ENCODE measurements at regions of chr7 and their contacts with region 1.

Region 1: GRCh38 chr7:116984917-116985316 is 31.6 kb downstream of the ST7 start:
- DNase-seq: no peak
- H3K4me3 Mint-ChIP-seq: no peak overlapping the region
- H3K27ac Mint-ChIP-seq: no peak overlapping the region
- H3K4me1 Mint-ChIP-seq: peaks cover 2% of the 10 kb centered on the region
- H3K27me3 Mint-ChIP-seq: no peaks in the 10 kb centered on the region

Region 2: DNA sequence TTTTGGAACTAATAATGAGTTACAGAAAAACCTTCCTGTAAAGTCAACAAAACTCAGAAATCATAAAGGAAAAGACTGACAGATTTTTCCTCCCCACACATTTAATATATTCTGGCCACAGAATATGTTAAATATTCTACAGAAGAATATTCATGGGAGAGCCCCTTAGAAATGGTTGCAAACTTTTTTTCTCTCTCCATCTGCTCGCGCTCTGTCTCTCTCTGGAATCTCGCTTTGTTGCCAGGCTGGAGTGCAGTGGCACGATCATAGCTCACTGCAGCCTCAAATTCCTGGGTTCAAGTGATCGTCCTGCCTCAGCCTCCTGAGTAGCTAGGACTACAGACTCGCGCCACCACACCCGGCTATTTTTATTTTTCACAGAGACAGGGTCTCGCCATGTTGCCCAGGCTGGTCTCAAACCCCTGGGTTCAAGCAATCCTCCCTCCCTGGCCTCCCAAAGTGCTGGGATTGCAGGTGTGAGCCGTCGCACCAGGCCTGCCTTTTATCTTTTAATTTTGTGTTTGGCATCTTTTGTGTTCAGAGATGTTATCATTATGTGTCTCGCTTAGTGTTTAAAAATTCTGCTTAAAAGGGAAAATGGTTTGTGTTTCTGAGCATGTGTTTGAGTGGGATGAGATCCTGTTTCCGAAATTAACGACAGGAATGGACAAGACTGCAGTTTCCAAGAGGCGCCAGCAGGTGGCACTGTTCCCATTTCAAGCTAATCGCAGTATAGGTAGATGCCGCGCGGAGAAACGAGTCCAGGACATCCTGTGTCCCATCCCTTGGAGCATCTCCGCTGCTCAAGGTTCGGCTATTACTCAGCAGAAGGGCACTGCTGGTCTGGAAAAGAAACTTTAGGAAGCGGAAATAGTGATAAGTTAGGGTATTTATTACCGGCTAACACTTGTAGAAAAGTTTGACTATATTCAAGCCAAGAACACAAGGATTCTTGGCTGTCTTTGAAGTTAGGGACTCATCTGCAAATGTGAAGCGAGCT is 54.7 kb before region 1 on chr7:
- CTCF ChIA-PET with region 1: interaction called, 6 read pairs
- intact Hi-C with region 1: loop called (anchors 1 kb)
- DNase-seq: peak; percentile 85
- H3K4me3 Mint-ChIP-seq: no peak overlapping the region
- H3K27ac Mint-ChIP-seq: no peak overlapping the region
- H3K4me1 Mint-ChIP-seq: peaks cover 3% of the 10 kb centered on the region
- H3K27me3 Mint-ChIP-seq: no peaks in the 10 kb centered on the region

Region 3: GRCh38 chr7:117110480-117111337 is 125.8 kb after region 1 on chr7:
- CTCF ChIA-PET with region 1: interaction called, 307 read pairs
- intact Hi-C with region 1: no loop called
- DNase-seq: peak; percentile 75
- H3K4me3 Mint-ChIP-seq: peak overlapping the region; percentile 27
- H3K27ac Mint-ChIP-seq: peak overlapping the region; percentile 24
- H3K4me1 Mint-ChIP-seq: peaks cover 34% of the 10 kb centered on the region
- H3K27me3 Mint-ChIP-seq: no peaks in the 10 kb centered on the region

Region 4: GRCh38 chr7:117119192-117119924 is 134.4 kb after region 1 on chr7:
- CTCF ChIA-PET with region 1: interaction called, 307 read pairs
- intact Hi-C with region 1: loop called (anchors 1 kb)
- DNase-seq: peak; percentile 88
- H3K4me3 Mint-ChIP-seq: no peak overlapping the region
- H3K27ac Mint-ChIP-seq: no peak overlapping the region
- H3K4me1 Mint-ChIP-seq: peaks cover 5% of the 10 kb centered on the region
- H3K27me3 Mint-ChIP-seq: peaks cover 1% of the 10 kb centered on the region

Region 5: GRCh38 chr7:117127585-117128168 is 142.8 kb after region 1 on chr7:
- CTCF ChIA-PET with region 1: interaction called, 307 read pairs
- intact Hi-C with region 1: loop called (anchors 1 kb)
- DNase-seq: peak; percentile 73
- H3K4me3 Mint-ChIP-seq: no peak overlapping the region
- H3K27ac Mint-ChIP-seq: no peak overlapping the region
- H3K4me1 Mint-ChIP-seq: no peaks in the 10 kb centered on the region
- H3K27me3 Mint-ChIP-seq: no peaks in the 10 kb centered on the region

Measured in activated naive CD4-positive, alpha-beta T cell treated with anti-CD3 and anti-CD28 coated beads for 36 hours (primary cell).